T-cell (primary cell): ENCODE measurements at regions of chr10 and their contacts with region 1.

Region 1: GRCh38 chr10:124453960-124454610 is 4.2 kb upstream of the NKX1-2 start:
- DNase-seq: no peak
- ATAC-seq: no peak
- H3K4me3 ChIP-seq: no peak overlapping the region
- H3K4me3 Mint-ChIP-seq: no peak overlapping the region
- H3K27ac ChIP-seq: no peak overlapping the region
- H3K27ac Mint-ChIP-seq: no peak overlapping the region
- H3K4me1 ChIP-seq: peaks cover 0 to 10% of the 10 kb centered on the region in 2 experiments
- H3K4me1 Mint-ChIP-seq: peaks cover 12 to 15% (median 12%) of the 10 kb centered on the region in 3 donors
- H3K27me3 ChIP-seq: peaks cover 30 to 59% of the 10 kb centered on the region in 2 experiments
- H3K27me3 Mint-ChIP-seq: peaks cover 71 to 82% of the 10 kb centered on the region in 2 donors

Region 2: GRCh38 chr10:123485341-123485960 is 968.6 kb before region 1 on chr10:
- CTCF ChIA-PET with region 1: no interaction called
- POLR2A ChIA-PET with region 1: interaction called in 1 of 2 experiments, 10 read pairs
- DNase-seq: no peak
- ATAC-seq: no peak
- H3K4me3 ChIP-seq: no peak overlapping the region
- H3K4me3 Mint-ChIP-seq: no peak overlapping the region
- H3K27ac ChIP-seq: no peak overlapping the region
- H3K27ac Mint-ChIP-seq: no peak overlapping the region
- H3K4me1 ChIP-seq: no peaks in the 10 kb centered on the region
- H3K4me1 Mint-ChIP-seq: no peaks in the 10 kb centered on the region
- H3K27me3 ChIP-seq: peaks cover 0 to 15% of the 10 kb centered on the region in 2 experiments
- H3K27me3 Mint-ChIP-seq: peaks cover 15 to 39% of the 10 kb centered on the region in 2 donors

Region 3: GRCh38 chr10:124403548-124403947 is 50.5 kb before region 1 on chr10:
- CTCF ChIA-PET with region 1: no interaction called
- POLR2A ChIA-PET with region 1: no interaction called
- DNase-seq: peak in 18 of 35 experiments; percentile 5 to 82 (median 16)
- ATAC-seq: peak; percentile 95 to 99 (median 98)
- H3K4me3 ChIP-seq: no peak overlapping the region
- H3K4me3 Mint-ChIP-seq: no peak overlapping the region
- H3K27ac ChIP-seq: peak overlapping the region; percentile 30
- H3K27ac Mint-ChIP-seq: peak overlapping the region; percentile 70 to 86
- H3K4me1 ChIP-seq: peaks cover 0 to 10% of the 10 kb centered on the region in 2 experiments
- H3K4me1 Mint-ChIP-seq: peaks cover 10 to 12% (median 11%) of the 10 kb centered on the region in 3 donors
- H3K27me3 ChIP-seq: no peaks in the 10 kb centered on the region
- H3K27me3 Mint-ChIP-seq: no peaks in the 10 kb centered on the region

Region 4: DNA sequence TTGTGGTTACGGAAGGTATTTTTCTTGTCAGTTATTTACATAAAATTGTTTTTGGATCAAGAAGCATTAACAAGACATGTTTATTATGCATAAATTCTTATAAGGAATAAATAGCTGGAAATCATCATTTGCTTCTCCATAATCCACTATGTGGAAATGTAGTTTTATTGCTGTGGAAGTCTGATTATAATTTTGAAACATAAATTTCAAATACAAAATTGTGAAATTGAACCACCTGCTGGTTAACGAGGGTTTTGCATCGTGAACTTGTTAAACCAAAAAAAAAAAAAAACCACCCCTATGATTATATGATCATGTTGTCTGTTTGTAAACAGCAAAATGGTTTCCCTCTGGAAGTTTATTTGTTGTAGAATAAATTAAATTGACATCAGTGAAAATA is 373.4 kb after region 1 on chr10:
- CTCF ChIA-PET with region 1: no interaction called
- POLR2A ChIA-PET with region 1: interaction called in 1 of 2 experiments, 14 read pairs
- DNase-seq: peak in 5 of 35 experiments; percentile 5 to 49 (median 7)
- ATAC-seq: no peak
- H3K4me3 ChIP-seq: no peak overlapping the region
- H3K4me3 Mint-ChIP-seq: no peak overlapping the region
- H3K27ac ChIP-seq: no peak overlapping the region
- H3K27ac Mint-ChIP-seq: no peak overlapping the region
- H3K4me1 ChIP-seq: no peaks in the 10 kb centered on the region
- H3K4me1 Mint-ChIP-seq: no peaks in the 10 kb centered on the region
- H3K27me3 ChIP-seq: no peaks in the 10 kb centered on the region
- H3K27me3 Mint-ChIP-seq: no peaks in the 10 kb centered on the region